PC-3 (cell line): ENCODE measurements at regions of chr6 and their contacts with region 1.

Region 1: DNA sequence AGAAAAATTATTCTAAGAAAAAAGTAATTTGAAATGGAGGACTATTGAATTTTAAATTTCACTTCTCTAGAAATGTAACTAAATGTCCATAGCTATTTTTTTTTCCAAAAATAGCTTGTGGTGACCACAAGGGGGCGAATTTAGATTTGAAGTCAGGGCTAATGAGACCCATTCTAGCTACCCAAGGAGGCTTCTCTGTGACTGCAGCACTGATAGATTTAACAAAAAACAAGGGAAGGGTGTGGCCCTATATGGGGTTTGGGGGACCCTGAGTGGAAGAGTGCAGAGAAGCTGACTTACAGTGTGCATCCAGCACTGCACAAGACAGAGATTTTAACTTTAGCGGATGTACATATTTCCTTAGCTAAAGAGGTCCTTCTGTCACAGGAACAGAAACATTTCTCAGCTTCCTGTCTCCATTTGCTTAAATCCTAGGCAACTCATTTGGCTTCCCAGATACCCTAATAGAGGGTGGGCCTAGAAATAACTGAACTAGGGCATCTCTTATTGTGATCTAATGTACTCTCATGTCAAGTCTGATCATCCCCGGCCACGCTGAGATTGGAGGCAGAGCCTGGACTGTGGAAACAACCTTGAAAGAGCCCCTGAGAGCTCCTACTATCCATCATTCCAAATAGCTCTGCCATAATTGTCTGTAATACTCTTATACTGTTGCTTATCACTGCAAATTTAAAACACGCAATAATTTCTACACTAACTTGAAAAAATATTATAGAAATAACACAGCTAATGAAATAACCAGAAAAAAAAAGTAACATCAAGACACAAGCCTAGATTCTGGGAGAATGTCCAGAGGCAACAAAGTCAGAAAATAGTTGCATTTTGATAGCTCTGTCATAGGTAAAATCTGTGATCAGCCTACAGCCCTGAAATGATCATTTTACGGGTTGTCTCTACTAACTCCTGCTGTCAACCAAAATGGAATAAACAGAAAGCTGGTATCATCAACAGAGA is 93.6 kb downstream of the SNAP91 start:
- DNase-seq: peak; percentile 42
- ATAC-seq: peak; percentile 31; the same call in 1 of the 2 replicates
- H3K4me3 ChIP-seq: no peak overlapping the region
- H3K27ac ChIP-seq: no peak overlapping the region
- H3K4me1 ChIP-seq: no peaks in the 10 kb centered on the region
- H3K27me3 ChIP-seq: peaks cover 29% of the 10 kb centered on the region
- CTCF ChIP-seq: peak; percentile 67

Region 2: DNA sequence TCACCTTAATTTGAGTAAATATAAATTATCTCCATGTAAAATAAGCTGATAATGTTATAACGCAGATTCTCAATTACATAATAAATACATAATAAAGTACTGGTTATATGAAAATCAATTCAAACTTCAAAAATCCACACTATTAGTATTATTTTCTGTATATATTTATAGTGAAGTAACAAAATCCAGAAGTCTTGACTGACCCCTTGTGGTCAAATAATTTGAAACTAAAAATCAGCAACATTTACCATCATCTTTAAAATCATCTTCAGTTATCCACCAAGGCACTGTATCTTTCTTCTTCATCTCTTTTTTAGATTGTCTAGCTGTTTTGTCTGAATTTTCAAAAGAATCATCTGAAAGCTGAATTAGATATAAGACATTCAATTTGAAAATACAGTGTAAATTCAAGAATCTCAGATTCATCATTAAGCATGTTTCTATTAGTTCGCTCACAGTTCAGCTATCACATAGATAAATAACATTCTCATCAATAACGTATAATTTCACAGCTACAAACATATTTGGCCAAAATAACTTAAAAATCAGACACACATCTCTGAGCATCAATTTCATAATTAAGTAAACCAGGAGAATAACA is 605.6 kb after region 1 on chr6:
- CTCF ChIA-PET with region 1: no interaction called
- POLR2A ChIA-PET with region 1: no interaction called
- intact Hi-C with region 1: loop called (anchors 2 kb)
- DNase-seq: peak; percentile 48
- ATAC-seq: no peak
- H3K4me3 ChIP-seq: no peak overlapping the region
- H3K27ac ChIP-seq: no peak overlapping the region
- H3K4me1 ChIP-seq: no peaks in the 10 kb centered on the region
- H3K27me3 ChIP-seq: no peaks in the 10 kb centered on the region
- CTCF ChIP-seq: peak; percentile 56